T-cell (primary cell): ENCODE measurements at regions of chr15 and their contacts with region 1.

Region 1: GRCh38 chr15:81265944-81266775 is 57.8 kb downstream of the STARD5 start:
- DNase-seq: peak; percentile 47 to 89 (median 75)
- ATAC-seq: peak; percentile 89 to 91 (median 90)
- H3K4me3 ChIP-seq: peak overlapping the region; percentile 0 to 49
- H3K4me3 Mint-ChIP-seq: peak overlapping the region; percentile 64 to 72 (median 64)
- H3K27ac ChIP-seq: no peak overlapping the region
- H3K27ac Mint-ChIP-seq: peak overlapping the region in 1 of 2 donors; percentile 40
- H3K4me1 ChIP-seq: peaks cover 25 to 31% of the 10 kb centered on the region in 2 experiments
- H3K4me1 Mint-ChIP-seq: peaks cover 27 to 37% (median 36%) of the 10 kb centered on the region in 3 donors
- H3K27me3 ChIP-seq: peaks cover 0 to 17% of the 10 kb centered on the region in 2 experiments
- H3K27me3 Mint-ChIP-seq: no peaks in the 10 kb centered on the region

Region 2: DNA sequence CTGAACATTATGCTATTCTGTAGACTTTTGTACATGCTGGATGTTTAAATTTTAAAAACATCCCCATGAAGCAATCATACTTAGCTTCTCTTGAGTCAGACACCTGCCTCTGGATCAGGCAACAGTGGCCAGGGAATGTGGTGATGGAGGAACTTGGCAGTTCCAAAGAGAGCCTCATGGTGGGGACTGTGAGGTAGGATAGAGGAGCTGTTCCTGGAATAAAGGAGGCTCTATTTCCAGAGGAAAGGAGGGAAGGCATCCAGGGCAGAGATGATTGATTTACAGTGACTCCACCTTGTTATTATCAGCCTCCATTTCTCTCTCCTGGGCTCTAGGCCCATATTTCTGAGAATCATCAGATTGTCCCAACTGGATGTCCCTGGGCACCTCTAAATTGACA is 606.0 kb before region 1 on chr15:
- CTCF ChIA-PET with region 1: no interaction called
- POLR2A ChIA-PET with region 1: no interaction called
- DNase-seq: no peak
- ATAC-seq: no peak
- H3K4me3 ChIP-seq: no peak overlapping the region
- H3K4me3 Mint-ChIP-seq: no peak overlapping the region
- H3K27ac ChIP-seq: no peak overlapping the region
- H3K27ac Mint-ChIP-seq: no peak overlapping the region
- H3K4me1 ChIP-seq: no peaks in the 10 kb centered on the region
- H3K4me1 Mint-ChIP-seq: no peaks in the 10 kb centered on the region
- H3K27me3 ChIP-seq: peaks cover 0 to 15% of the 10 kb centered on the region in 2 experiments
- H3K27me3 Mint-ChIP-seq: peaks cover 22 to 29% of the 10 kb centered on the region in 2 donors

Region 3: GRCh38 chr15:81155375-81156218 is 110.6 kb before region 1 on chr15:
- CTCF ChIA-PET with region 1: interaction called, 26 to 67 read pairs
- POLR2A ChIA-PET with region 1: no interaction called
- DNase-seq: peak in 3 of 35 experiments; percentile 1 to 49 (median 18)
- ATAC-seq: peak in 3 of 4 experiments; percentile 36 to 55 (median 43)
- H3K4me3 ChIP-seq: no peak overlapping the region
- H3K4me3 Mint-ChIP-seq: no peak overlapping the region
- H3K27ac ChIP-seq: no peak overlapping the region
- H3K27ac Mint-ChIP-seq: peak overlapping the region in 1 of 2 donors; percentile 40
- H3K4me1 ChIP-seq: no peaks in the 10 kb centered on the region
- H3K4me1 Mint-ChIP-seq: peaks cover 3 to 22% (median 16%) of the 10 kb centered on the region in 3 donors
- H3K27me3 ChIP-seq: peaks cover 0 to 4% of the 10 kb centered on the region in 2 experiments
- H3K27me3 Mint-ChIP-seq: peaks cover 0 to 4% of the 10 kb centered on the region in 2 donors

Region 4: DNA sequence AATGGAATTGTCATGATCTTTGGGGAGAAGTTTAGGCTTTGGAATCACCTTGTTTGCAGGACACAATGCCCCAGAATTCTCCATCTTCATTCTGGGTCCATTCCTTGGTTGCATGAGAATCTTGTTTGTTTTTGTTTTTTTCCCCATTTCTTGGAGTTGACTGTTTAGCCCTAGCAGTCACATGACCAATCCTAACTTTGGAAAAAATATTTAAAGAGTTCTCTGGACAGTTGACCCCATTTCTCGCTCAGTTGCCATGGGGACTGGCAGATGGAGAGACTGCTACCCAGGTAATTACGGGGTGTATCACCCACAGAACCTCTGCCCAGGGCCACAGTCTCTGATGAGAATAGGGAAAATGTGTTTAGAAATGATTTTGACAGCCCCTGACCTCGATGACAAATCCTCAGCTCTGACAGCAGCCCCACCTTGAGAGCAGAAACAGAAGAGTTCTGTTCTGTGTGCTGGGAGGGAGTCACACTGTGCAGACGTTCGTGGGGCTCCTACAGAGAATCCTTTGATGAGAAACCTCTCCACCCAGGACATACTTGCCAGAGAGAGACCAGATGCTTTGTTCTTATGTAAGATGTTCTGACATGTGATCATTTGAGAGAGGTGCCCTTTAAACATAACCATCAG is 11.8 kb before region 1 on chr15:
- CTCF ChIA-PET with region 1: interaction called, 4 to 11 read pairs
- POLR2A ChIA-PET with region 1: no interaction called
- DNase-seq: peak in 2 of 35 experiments; percentile 29 to 43
- ATAC-seq: peak in 1 of 4 experiments; percentile 98
- H3K4me3 ChIP-seq: no peak overlapping the region
- H3K4me3 Mint-ChIP-seq: peak overlapping the region in 1 of 3 donors; percentile 41
- H3K27ac ChIP-seq: no peak overlapping the region
- H3K27ac Mint-ChIP-seq: peak overlapping the region in 1 of 2 donors; percentile 86
- H3K4me1 ChIP-seq: no peaks in the 10 kb centered on the region
- H3K4me1 Mint-ChIP-seq: peaks cover 0 to 32% (median 0%) of the 10 kb centered on the region in 3 donors
- H3K27me3 ChIP-seq: peaks cover 0 to 12% of the 10 kb centered on the region in 2 experiments
- H3K27me3 Mint-ChIP-seq: peaks cover 13 to 21% of the 10 kb centered on the region in 2 donors

Region 5: DNA sequence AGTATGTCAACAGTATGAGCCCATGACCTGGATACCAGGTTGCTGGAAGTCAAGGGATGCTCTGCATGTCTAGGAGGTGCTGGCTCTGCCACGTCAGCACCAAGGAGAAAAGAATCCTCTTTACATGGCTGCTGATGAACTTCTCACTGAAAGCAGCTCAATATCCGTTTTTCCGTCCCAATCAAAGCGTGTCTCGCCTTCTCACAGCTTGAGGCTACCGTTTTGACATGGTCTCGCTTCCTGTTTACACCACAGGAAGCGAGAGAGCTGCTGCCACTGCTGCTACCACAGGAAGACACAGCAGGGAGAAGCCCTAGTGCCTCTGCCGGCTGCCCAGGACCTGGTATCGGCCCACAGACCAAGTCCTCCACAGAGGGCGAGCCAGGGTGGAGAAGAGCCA is 30.5 kb after region 1 on chr15:
- CTCF ChIA-PET with region 1: interaction called, 10 to 15 read pairs
- POLR2A ChIA-PET with region 1: no interaction called
- DNase-seq: peak; percentile 64 to 90 (median 74)
- ATAC-seq: peak; percentile 56 to 75 (median 70)
- H3K4me3 ChIP-seq: peak overlapping the region; percentile 68 to 98
- H3K4me3 Mint-ChIP-seq: peak overlapping the region; percentile 95 to 100 (median 100)
- H3K27ac ChIP-seq: peak overlapping the region; percentile 94
- H3K27ac Mint-ChIP-seq: peak overlapping the region; percentile 100
- H3K4me1 ChIP-seq: peaks cover 47 to 75% of the 10 kb centered on the region in 2 experiments
- H3K4me1 Mint-ChIP-seq: peaks cover 58 to 92% (median 64%) of the 10 kb centered on the region in 3 donors
- H3K27me3 ChIP-seq: no peaks in the 10 kb centered on the region
- H3K27me3 Mint-ChIP-seq: no peaks in the 10 kb centered on the region

Region 6: GRCh38 chr15:81308260-81308659 is 42.1 kb after region 1 on chr15:
- CTCF ChIA-PET with region 1: interaction called, 3 to 11 read pairs
- POLR2A ChIA-PET with region 1: no interaction called
- DNase-seq: no peak
- ATAC-seq: no peak
- H3K4me3 ChIP-seq: no peak overlapping the region
- H3K4me3 Mint-ChIP-seq: no peak overlapping the region
- H3K27ac ChIP-seq: no peak overlapping the region
- H3K27ac Mint-ChIP-seq: peak overlapping the region; percentile 61 to 69
- H3K4me1 ChIP-seq: peaks cover 44 to 78% of the 10 kb centered on the region in 2 experiments
- H3K4me1 Mint-ChIP-seq: peaks cover 82 to 92% (median 89%) of the 10 kb centered on the region in 3 donors
- H3K27me3 ChIP-seq: no peaks in the 10 kb centered on the region
- H3K27me3 Mint-ChIP-seq: no peaks in the 10 kb centered on the region

Region 7: DNA sequence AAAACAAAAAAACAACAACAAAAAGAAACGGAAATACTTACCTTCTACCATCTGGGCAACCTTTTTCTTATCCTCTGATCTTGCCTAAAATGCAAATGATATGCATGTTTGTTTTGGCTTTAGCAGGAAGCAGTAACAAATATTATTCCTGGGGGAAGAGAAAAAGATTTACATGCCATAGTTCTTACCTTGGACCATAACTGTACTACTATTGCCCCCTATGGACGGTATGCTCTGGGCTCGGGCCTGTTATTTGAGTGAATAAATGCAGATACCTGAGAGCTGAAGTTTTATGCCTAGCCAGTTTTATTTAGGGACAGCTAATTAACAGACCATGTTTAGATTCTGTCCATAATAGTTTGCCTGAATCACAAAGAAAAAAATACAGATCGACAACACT is 70.4 kb after region 1 on chr15:
- CTCF ChIA-PET with region 1: interaction called, 5 to 22 read pairs
- POLR2A ChIA-PET with region 1: no interaction called
- DNase-seq: peak in 16 of 35 experiments; percentile 12 to 67 (median 30)
- ATAC-seq: peak; percentile 57 to 73 (median 67)
- H3K4me3 ChIP-seq: no peak overlapping the region
- H3K4me3 Mint-ChIP-seq: no peak overlapping the region
- H3K27ac ChIP-seq: no peak overlapping the region
- H3K27ac Mint-ChIP-seq: no peak overlapping the region
- H3K4me1 ChIP-seq: peaks cover 0 to 2% of the 10 kb centered on the region in 2 experiments
- H3K4me1 Mint-ChIP-seq: peaks cover 7 to 25% (median 16%) of the 10 kb centered on the region in 3 donors
- H3K27me3 ChIP-seq: no peaks in the 10 kb centered on the region
- H3K27me3 Mint-ChIP-seq: peaks cover 0 to 2% of the 10 kb centered on the region in 2 donors

Region 8: DNA sequence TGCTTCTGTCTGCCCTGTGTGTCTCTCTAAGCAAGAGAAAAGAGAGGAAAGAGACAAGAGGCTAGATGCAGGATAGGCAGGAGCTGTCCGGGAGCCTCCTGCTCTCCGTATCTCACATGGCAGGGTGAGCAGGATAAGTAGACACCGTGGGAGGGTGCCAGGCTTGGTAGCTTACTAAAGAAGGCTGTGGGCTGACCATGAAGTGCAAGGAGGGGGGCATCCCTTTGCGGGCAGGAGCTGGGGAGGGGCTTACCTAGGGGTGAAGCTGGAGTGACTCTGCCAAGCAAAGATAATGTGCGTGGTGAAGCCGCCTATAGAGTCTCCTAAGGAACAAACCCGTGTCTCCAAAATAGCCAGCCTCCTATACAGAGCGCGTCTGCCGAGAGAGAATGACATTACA is 141.6 kb after region 1 on chr15:
- CTCF ChIA-PET with region 1: interaction called, 4 to 39 read pairs
- POLR2A ChIA-PET with region 1: interaction called in 1 of 2 experiments, 3 read pairs
- DNase-seq: no peak
- ATAC-seq: no peak
- H3K4me3 ChIP-seq: no peak overlapping the region
- H3K4me3 Mint-ChIP-seq: no peak overlapping the region
- H3K27ac ChIP-seq: no peak overlapping the region
- H3K27ac Mint-ChIP-seq: no peak overlapping the region
- H3K4me1 ChIP-seq: peaks cover 2 to 4% of the 10 kb centered on the region in 2 experiments
- H3K4me1 Mint-ChIP-seq: peaks cover 4 to 7% (median 7%) of the 10 kb centered on the region in 3 donors
- H3K27me3 ChIP-seq: peaks cover 0 to 7% of the 10 kb centered on the region in 2 experiments
- H3K27me3 Mint-ChIP-seq: peaks cover 9 to 11% of the 10 kb centered on the region in 2 donors